ENCODE measurements at regions of chr14 and their contacts with region 1.

Region 1: DNA sequence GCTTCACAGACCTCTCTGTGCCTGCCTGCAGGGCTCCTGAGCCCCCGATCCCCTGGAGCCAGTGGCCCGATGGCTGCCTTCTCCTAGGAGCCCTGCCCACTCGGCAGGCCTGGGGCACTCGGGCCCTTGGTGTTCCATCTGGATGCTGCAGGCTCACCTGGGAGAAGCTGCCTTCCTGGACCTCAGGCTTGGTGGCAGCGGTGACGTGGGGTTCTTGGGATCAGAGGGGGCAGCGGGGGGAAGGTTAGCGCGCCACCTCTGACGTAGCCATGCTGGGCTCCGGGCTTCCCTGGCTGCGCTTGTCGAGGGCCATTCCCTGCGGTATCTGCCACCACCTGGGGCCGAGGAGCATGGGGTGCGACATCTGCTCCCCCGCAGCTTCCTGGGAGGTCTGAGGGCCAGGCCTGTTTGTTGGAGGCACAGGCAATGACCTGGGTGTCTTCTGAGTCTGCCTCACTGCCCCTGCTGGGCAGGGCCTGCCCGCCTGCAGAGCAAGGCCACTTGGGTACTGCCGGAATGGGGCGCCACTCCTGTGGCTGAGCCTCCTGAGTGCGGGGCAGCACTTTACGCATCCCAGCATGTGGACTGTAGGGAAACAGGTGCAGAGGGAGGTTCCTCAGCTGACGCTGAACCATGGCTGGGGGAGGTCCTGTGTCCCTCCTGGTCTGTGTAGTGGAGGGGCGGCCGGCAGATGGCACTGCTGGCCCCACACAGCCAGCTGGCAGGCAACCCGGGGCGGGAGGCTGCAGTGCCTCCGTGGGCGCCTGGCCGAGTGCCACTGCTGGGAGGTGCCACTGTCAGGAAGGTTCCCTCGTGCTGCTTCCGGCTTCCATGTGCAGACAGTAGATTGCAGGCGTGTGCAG is 20.3 kb downstream of the MTA1 start:
- DNase-seq: no peak
- H3K4me3 ChIP-seq: no peak overlapping the region
- H3K27ac ChIP-seq: no peak overlapping the region
- H3K4me1 ChIP-seq: peaks cover 0 to 8% (median 3%) of the 10 kb centered on the region in 4 donors
- H3K27me3 ChIP-seq: no peaks in the 10 kb centered on the region
- CTCF ChIP-seq: no peak
- EP300 ChIP-seq: no peak
- POLR2A ChIP-seq: no peak

Region 2: GRCh38 chr14:105351920-105352851 is 87.7 kb before region 1 on chr14:
- intact Hi-C with region 1: no loop called
- DNase-seq: peak; percentile 90
- H3K4me3 ChIP-seq: no peak overlapping the region
- H3K27ac ChIP-seq: peak overlapping the region in 1 of 4 donors; percentile 3
- H3K4me1 ChIP-seq: peaks cover 0 to 10% (median 4%) of the 10 kb centered on the region in 4 donors
- H3K27me3 ChIP-seq: no peaks in the 10 kb centered on the region
- CTCF ChIP-seq: peak; percentile 68 to 90 (median 84)
- EP300 ChIP-seq: no peak
- POLR2A ChIP-seq: no peak

Region 3: DNA sequence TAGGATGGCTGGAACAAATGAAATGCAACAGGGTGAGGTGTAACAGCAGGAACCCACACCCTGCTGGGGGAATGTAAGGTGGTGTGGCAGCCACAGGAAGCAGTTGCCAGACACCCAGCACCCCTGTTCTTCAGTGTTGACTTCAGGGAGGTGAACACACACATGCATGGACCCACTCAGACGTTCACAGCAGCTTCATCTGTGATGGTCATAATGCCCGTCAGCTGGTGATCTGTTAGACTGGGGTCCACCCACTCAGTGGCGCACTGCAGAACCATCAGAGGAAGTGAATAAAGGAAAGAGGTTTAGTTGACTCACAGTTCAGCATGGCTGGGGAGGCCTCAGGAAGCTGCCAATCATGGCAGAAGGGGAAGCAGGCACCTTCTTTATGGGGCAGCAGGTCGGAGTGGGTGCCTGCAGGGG is 64.3 kb before region 1 on chr14:
- intact Hi-C with region 1: loop called (anchors 5 kb)
- DNase-seq: no peak
- H3K4me3 ChIP-seq: no peak overlapping the region
- H3K27ac ChIP-seq: no peak overlapping the region
- H3K4me1 ChIP-seq: peaks cover 0 to 4% (median 0%) of the 10 kb centered on the region in 4 donors
- H3K27me3 ChIP-seq: no peaks in the 10 kb centered on the region
- CTCF ChIP-seq: no peak
- EP300 ChIP-seq: no peak
- POLR2A ChIP-seq: no peak

Region 4: GRCh38 chr14:105640936-105641843 is 201.3 kb after region 1 on chr14:
- intact Hi-C with region 1: no loop called
- DNase-seq: no peak
- H3K4me3 ChIP-seq: no peak overlapping the region
- H3K27ac ChIP-seq: peak overlapping the region in 1 of 4 donors; percentile 64
- H3K4me1 ChIP-seq: peaks cover 0 to 9% (median 8%) of the 10 kb centered on the region in 4 donors
- H3K27me3 ChIP-seq: no peaks in the 10 kb centered on the region
- CTCF ChIP-seq: no peak
- EP300 ChIP-seq: no peak
- POLR2A ChIP-seq: no peak

Measured in sigmoid colon (tissue), 7 donors.